ENCODE measurements at regions of chr9 and their contacts with region 1.

Region 1: GRCh38 chr9:133149126-133150107 is 14.3 kb downstream of the GBGT1 start:
- DNase-seq: peak; percentile 77 to 94
- H3K4me3 ChIP-seq: peak overlapping the region; percentile 81 to 84
- H3K27ac ChIP-seq: peak overlapping the region; percentile 72 to 83
- H3K4me1 ChIP-seq: peaks cover 6 to 23% of the 10 kb centered on the region in 2 donors
- H3K27me3 ChIP-seq: no peaks in the 10 kb centered on the region
- CTCF ChIP-seq: peak in 2 of 3 experiments; percentile 24 to 37

Region 2: GRCh38 chr9:133030317-133031129 is 118.9 kb before region 1 on chr9 and contains the start of gene GTF3C5:
- intact Hi-C with region 1: loop called (anchors 2 kb)
- DNase-seq: peak; percentile 83 to 97
- H3K4me3 ChIP-seq: peak within 1 kb of the TSS; percentile 86 to 96
- H3K27ac ChIP-seq: peak within 1 kb of the TSS; percentile 85 to 91
- H3K4me1 ChIP-seq: peaks cover 10 to 23% of the 10 kb centered on the region in 2 donors
- H3K27me3 ChIP-seq: no peaks in the 10 kb centered on the region
- CTCF ChIP-seq: no peak
- total RNA-seq, gene GTF3C5: 25.9 TPM

Region 3: DNA sequence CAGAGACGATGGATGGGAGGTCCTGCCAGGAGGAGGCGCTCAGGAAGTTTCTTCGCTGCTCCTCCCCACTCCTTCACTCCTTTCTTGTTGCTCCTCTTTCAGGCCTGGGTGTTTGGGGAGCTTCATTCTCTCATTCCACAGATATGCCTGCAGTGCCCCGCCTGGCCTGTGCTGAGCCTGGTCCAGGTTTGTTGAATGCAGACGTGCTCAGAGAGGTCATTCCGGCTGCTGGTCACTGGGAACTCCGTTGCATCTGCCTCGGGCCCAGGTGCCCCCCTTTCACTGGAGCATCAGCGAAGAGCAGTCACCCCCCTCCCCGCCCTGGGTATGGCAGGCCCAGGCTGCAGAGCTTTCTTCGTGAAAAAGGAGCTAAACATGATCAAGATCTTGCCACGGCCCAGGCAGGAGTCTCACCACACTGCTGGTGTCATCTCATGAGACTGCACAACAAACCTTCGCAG is 171.0 kb after region 1 on chr9:
- intact Hi-C with region 1: no loop called
- DNase-seq: peak in 1 of 2 donors; percentile 39
- H3K4me3 ChIP-seq: no peak overlapping the region
- H3K27ac ChIP-seq: no peak overlapping the region
- H3K4me1 ChIP-seq: no peaks in the 10 kb centered on the region
- H3K27me3 ChIP-seq: no peaks in the 10 kb centered on the region
- CTCF ChIP-seq: no peak

Region 4: DNA sequence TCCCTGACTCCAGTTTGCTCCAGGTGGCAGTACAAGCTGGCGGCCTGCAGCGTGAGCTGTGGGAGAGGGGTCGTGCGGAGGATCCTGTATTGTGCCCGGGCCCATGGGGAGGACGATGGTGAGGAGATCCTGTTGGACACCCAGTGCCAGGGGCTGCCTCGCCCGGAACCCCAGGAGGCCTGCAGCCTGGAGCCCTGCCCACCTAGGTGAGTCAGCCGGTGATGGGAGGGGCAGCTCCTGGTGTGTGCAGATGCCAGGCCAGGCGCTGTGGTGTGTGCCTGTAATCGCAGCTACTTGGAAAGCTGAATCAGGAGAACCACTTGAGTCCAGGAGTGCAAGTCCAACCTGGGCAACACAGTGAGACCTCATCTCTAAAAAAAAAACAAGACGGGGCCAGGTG is 300.3 kb after region 1 on chr9:
- intact Hi-C with region 1: no loop called
- DNase-seq: no peak
- H3K4me3 ChIP-seq: no peak overlapping the region
- H3K27ac ChIP-seq: no peak overlapping the region
- H3K4me1 ChIP-seq: no peaks in the 10 kb centered on the region
- H3K27me3 ChIP-seq: no peaks in the 10 kb centered on the region
- CTCF ChIP-seq: no peak

Measured in ascending aorta (tissue), 2 donors.